Heart right ventricle (tissue), 16 donors: ENCODE measurements at regions of chr12 and their contacts with region 1.

Region 1: GRCh38 chr12:1644534-1645438 is 15.8 kb downstream of the WNT5B start:
- DNase-seq: peak; percentile 84
- ATAC-seq: peak; percentile 39 to 86 (median 78)
- H3K4me3 ChIP-seq: no peak overlapping the region
- H3K27ac ChIP-seq: no peak overlapping the region
- H3K4me1 ChIP-seq: peaks cover 3 to 39% (median 21%) of the 10 kb centered on the region in 9 donors
- H3K27me3 ChIP-seq: peaks cover 0 to 4% (median 0%) of the 10 kb centered on the region in 7 donors
- CTCF ChIP-seq: no peak

Region 2: DNA sequence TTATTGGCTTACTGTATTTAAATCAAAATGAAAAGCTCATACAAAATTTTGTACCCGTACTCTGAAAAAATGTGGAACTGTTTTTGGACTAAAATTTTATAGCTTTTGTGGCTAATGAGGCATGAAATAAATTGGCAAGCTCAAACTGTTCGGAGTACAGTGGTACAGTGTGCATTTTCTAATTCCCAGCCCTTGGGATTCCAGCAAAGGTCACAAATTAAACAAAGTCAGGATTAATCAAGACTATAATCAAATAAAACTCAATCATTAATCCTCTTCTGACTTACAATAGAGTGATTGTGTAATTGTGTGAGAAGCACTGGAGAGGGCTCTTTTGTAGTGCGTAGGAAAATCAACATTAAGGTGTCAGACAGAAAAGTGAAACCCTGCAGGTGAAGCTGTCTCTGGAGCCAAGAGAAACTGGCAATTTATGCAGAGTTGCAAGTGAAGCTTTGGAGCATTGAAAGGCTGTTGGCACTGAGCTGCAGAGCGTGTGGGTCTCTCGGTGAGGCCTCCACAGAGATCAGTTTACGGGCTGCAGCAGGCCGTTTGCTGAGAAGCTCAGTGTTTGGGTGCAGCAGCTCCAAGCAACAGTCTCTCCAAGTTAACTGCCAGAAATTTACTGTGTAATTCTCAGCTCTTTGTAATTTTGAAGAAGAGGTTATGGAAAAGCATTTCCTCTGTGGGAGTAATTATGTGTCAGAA is 326.3 kb before region 1 on chr12:
- intact Hi-C with region 1: no loop called
- DNase-seq: peak in 1 of 2 donors; percentile 19
- ATAC-seq: peak in 6 of 8 donors; percentile 45 to 84 (median 62)
- H3K4me3 ChIP-seq: peak overlapping the region in 2 of 10 donors; percentile 0 to 3
- H3K27ac ChIP-seq: peak overlapping the region in 5 of 10 donors; percentile 26 to 64 (median 45)
- H3K4me1 ChIP-seq: peaks cover 0 to 49% (median 9%) of the 10 kb centered on the region in 9 donors
- H3K27me3 ChIP-seq: no peaks in the 10 kb centered on the region
- CTCF ChIP-seq: no peak

Region 3: DNA sequence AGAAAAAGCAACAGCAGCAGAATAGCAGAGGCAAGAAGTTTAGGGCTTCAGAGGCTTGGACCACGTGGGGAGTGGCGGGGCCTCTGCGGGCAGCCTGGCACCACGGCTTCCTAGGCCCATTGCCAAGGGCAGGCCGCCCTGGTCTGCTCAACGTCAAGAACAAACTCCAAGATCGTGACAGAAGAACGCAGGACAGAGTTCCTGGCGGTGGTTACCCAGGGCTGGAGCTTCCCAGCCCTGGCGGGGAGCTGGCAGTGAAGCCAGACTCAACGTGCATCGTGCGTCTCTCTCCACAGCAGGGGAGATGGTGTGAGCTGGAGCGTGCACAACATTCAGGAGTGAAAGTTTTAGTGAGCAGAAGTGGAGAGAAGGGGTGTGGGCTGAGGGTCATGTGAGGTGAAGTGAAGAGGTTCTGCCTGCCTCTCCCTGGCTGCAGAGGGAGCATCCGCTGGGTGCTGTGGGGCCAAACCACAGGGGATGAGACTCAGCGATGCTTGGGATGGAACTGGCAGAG is 287.5 kb after region 1 on chr12:
- intact Hi-C with region 1: loop called in 3 of 10 experiments (anchors 5 to 10 kb)
- DNase-seq: peak; percentile 72 to 75
- ATAC-seq: peak; percentile 61 to 90 (median 80)
- H3K4me3 ChIP-seq: no peak overlapping the region
- H3K27ac ChIP-seq: peak overlapping the region in 4 of 10 donors; percentile 40 to 52 (median 44)
- H3K4me1 ChIP-seq: peaks cover 4 to 57% (median 18%) of the 10 kb centered on the region in 9 donors
- H3K27me3 ChIP-seq: peaks cover 0 to 4% (median 0%) of the 10 kb centered on the region in 7 donors
- CTCF ChIP-seq: no peak